CD4-positive, alpha-beta T cell (primary cell): ENCODE measurements at regions of chr1 and their contacts with region 1.

Region 1: GRCh38 chr1:51768971-51769588 is 109.4 kb downstream of the NRDC start:
- DNase-seq: peak in 4 of 14 experiments; percentile 39 to 69 (median 58)
- ATAC-seq: peak; percentile 76
- H3K4me3 ChIP-seq: no peak overlapping the region
- H3K4me3 Mint-ChIP-seq: no peak overlapping the region
- H3K27ac ChIP-seq: no peak overlapping the region
- H3K27ac Mint-ChIP-seq: peak overlapping the region; percentile 12
- H3K4me1 ChIP-seq: no peaks in the 10 kb centered on the region
- H3K4me1 Mint-ChIP-seq: peaks cover 7% of the 10 kb centered on the region
- H3K27me3 ChIP-seq: no peaks in the 10 kb centered on the region
- H3K27me3 Mint-ChIP-seq: no peaks in the 10 kb centered on the region
- CTCF ChIP-seq: peak; percentile 75

Region 2: GRCh38 chr1:50774759-50775351 is 994.2 kb before region 1 on chr1:
- CTCF ChIA-PET with region 1: no interaction called
- POLR2A ChIA-PET with region 1: no interaction called
- intact Hi-C with region 1: loop called in 1 of 2 experiments (anchors 10 kb)
- DNase-seq: peak in 4 of 14 experiments; percentile 8 to 68 (median 57)
- ATAC-seq: no peak
- H3K4me3 ChIP-seq: no peak overlapping the region
- H3K4me3 Mint-ChIP-seq: no peak overlapping the region
- H3K27ac ChIP-seq: no peak overlapping the region
- H3K27ac Mint-ChIP-seq: no peak overlapping the region
- H3K4me1 ChIP-seq: no peaks in the 10 kb centered on the region
- H3K4me1 Mint-ChIP-seq: peaks cover 8% of the 10 kb centered on the region
- H3K27me3 ChIP-seq: no peaks in the 10 kb centered on the region
- H3K27me3 Mint-ChIP-seq: no peaks in the 10 kb centered on the region
- CTCF ChIP-seq: peak; percentile 86

Region 3: GRCh38 chr1:51433269-51433971 is 335.7 kb before region 1 on chr1:
- CTCF ChIA-PET with region 1: no interaction called
- POLR2A ChIA-PET with region 1: no interaction called
- intact Hi-C with region 1: loop called in 1 of 2 experiments (anchors 10 kb)
- DNase-seq: peak in 2 of 14 experiments; percentile 10 to 76
- ATAC-seq: no peak
- H3K4me3 ChIP-seq: no peak overlapping the region
- H3K4me3 Mint-ChIP-seq: peak overlapping the region; percentile 49
- H3K27ac ChIP-seq: peak overlapping the region in 1 of 2 donors; percentile 3
- H3K27ac Mint-ChIP-seq: peak overlapping the region; percentile 52
- H3K4me1 ChIP-seq: peaks cover 34% of the 10 kb centered on the region
- H3K4me1 Mint-ChIP-seq: peaks cover 41% of the 10 kb centered on the region
- H3K27me3 ChIP-seq: no peaks in the 10 kb centered on the region
- H3K27me3 Mint-ChIP-seq: no peaks in the 10 kb centered on the region
- CTCF ChIP-seq: no peak

Region 4: DNA sequence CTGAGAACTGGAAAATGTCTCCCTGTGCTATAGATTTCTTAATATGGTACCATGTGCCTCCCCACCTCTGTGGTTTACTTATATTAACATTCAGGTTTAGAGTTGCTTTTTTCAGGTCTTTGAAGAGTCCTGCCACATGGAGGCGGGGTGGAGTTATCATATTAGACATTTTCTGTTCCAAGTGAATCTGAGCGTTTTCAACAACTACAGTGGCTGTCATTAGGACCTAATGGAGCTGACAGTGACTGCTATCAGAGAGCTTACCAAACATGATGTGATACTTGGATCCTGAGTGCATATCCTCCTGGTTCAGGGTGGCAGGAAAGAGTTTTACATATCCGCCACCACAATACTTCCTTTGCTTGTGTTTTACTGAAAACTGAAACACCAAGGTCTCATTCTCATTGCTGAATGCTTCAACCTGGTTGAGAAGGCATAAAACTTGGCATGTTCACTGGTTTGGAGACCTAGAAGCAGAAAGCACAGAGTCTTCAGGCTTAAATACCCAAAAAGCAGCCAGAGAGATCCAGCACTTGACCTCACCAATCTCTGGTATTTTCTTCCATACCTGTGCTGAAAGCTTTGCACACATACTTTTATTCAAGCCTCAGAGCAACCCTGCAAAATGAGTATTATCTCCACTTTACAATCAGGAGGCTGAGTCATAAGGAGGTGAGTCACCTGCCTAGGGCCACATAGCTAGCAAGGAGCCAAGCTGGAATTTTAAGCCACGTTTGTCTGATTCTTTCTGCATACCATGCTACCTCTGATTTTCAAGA is 199.6 kb before region 1 on chr1:
- CTCF ChIA-PET with region 1: no interaction called
- POLR2A ChIA-PET with region 1: no interaction called
- intact Hi-C with region 1: loop called in 1 of 2 experiments (anchors 5 kb)
- DNase-seq: peak in 10 of 14 experiments; percentile 2 to 69 (median 16)
- ATAC-seq: peak; percentile 84
- H3K4me3 ChIP-seq: peak overlapping the region; percentile 4
- H3K4me3 Mint-ChIP-seq: peak overlapping the region; percentile 40
- H3K27ac ChIP-seq: peak overlapping the region; percentile 43 to 69
- H3K27ac Mint-ChIP-seq: peak overlapping the region; percentile 78
- H3K4me1 ChIP-seq: peaks cover 38% of the 10 kb centered on the region
- H3K4me1 Mint-ChIP-seq: peaks cover 34% of the 10 kb centered on the region
- H3K27me3 ChIP-seq: no peaks in the 10 kb centered on the region
- H3K27me3 Mint-ChIP-seq: no peaks in the 10 kb centered on the region
- CTCF ChIP-seq: no peak

Region 5: GRCh38 chr1:51627678-51628077 is 141.4 kb before region 1 on chr1:
- CTCF ChIA-PET with region 1: interaction called, 4 read pairs
- POLR2A ChIA-PET with region 1: no interaction called
- intact Hi-C with region 1: loop called (anchors 5 kb)
- DNase-seq: peak in 1 of 14 experiments; percentile 24
- ATAC-seq: peak; percentile 37
- H3K4me3 ChIP-seq: no peak overlapping the region
- H3K4me3 Mint-ChIP-seq: no peak overlapping the region
- H3K27ac ChIP-seq: no peak overlapping the region
- H3K27ac Mint-ChIP-seq: no peak overlapping the region
- H3K4me1 ChIP-seq: no peaks in the 10 kb centered on the region
- H3K4me1 Mint-ChIP-seq: peaks cover 43% of the 10 kb centered on the region
- H3K27me3 ChIP-seq: no peaks in the 10 kb centered on the region
- H3K27me3 Mint-ChIP-seq: no peaks in the 10 kb centered on the region
- CTCF ChIP-seq: no peak

Region 6: DNA sequence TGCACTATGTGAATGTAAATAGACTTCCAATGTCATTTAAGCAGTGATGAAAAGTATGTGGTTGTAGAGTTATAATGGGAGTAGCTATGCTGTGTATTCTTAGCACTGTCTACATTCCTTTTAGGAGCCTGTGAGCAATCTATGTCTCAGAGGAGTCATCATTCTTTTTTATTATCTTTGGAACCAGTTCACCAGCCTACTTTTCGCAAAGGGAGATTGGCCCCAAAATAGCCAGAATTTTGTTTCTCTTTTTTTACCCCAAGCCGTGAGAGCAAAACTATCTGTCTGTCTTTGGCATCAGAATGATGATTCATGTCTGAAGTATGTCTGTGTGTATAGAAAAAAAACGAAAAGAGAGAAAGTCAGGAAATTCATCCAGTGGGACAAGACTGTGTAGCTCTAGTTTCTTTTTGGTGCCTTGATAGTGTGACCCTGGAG is 108.0 kb before region 1 on chr1:
- CTCF ChIA-PET with region 1: no interaction called
- POLR2A ChIA-PET with region 1: no interaction called
- intact Hi-C with region 1: no loop called
- DNase-seq: no peak
- ATAC-seq: no peak
- H3K4me3 ChIP-seq: no peak overlapping the region
- H3K4me3 Mint-ChIP-seq: no peak overlapping the region
- H3K27ac ChIP-seq: no peak overlapping the region
- H3K27ac Mint-ChIP-seq: no peak overlapping the region
- H3K4me1 ChIP-seq: no peaks in the 10 kb centered on the region
- H3K4me1 Mint-ChIP-seq: peaks cover 5% of the 10 kb centered on the region
- H3K27me3 ChIP-seq: no peaks in the 10 kb centered on the region
- H3K27me3 Mint-ChIP-seq: no peaks in the 10 kb centered on the region
- CTCF ChIP-seq: no peak

Region 7: GRCh38 chr1:51690285-51690961 is 78.7 kb before region 1 on chr1:
- CTCF ChIA-PET with region 1: no interaction called
- POLR2A ChIA-PET with region 1: no interaction called
- intact Hi-C with region 1: no loop called
- DNase-seq: peak in 2 of 14 experiments; percentile 26 to 37
- ATAC-seq: no peak
- H3K4me3 ChIP-seq: no peak overlapping the region
- H3K4me3 Mint-ChIP-seq: no peak overlapping the region
- H3K27ac ChIP-seq: no peak overlapping the region
- H3K27ac Mint-ChIP-seq: no peak overlapping the region
- H3K4me1 ChIP-seq: no peaks in the 10 kb centered on the region
- H3K4me1 Mint-ChIP-seq: peaks cover 31% of the 10 kb centered on the region
- H3K27me3 ChIP-seq: no peaks in the 10 kb centered on the region
- H3K27me3 Mint-ChIP-seq: no peaks in the 10 kb centered on the region
- CTCF ChIP-seq: no peak

Region 8: DNA sequence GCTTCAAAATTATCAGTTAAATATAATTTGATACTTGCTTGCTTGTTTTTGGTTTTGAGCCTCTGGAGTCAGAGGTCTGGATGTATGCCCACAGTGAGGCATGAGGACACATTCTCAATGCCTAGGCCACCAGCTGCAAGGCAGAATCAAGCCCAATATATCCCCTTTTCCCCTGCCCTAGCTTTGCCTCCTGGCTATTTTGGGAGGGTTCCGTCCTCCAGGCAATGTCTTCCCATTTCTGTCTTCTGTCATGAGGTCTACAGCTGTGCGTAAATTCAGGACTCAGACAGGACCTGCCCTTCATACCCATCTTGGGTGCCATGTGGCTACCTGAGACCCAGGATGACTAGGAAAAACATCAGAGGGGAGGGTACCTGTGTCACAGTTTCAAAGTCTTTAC is 90.3 kb after region 1 on chr1:
- CTCF ChIA-PET with region 1: no interaction called
- POLR2A ChIA-PET with region 1: no interaction called
- intact Hi-C with region 1: no loop called
- DNase-seq: no peak
- ATAC-seq: no peak
- H3K4me3 ChIP-seq: no peak overlapping the region
- H3K4me3 Mint-ChIP-seq: no peak overlapping the region
- H3K27ac ChIP-seq: no peak overlapping the region
- H3K27ac Mint-ChIP-seq: no peak overlapping the region
- H3K4me1 ChIP-seq: no peaks in the 10 kb centered on the region
- H3K4me1 Mint-ChIP-seq: peaks cover 46% of the 10 kb centered on the region
- H3K27me3 ChIP-seq: no peaks in the 10 kb centered on the region
- H3K27me3 Mint-ChIP-seq: no peaks in the 10 kb centered on the region
- CTCF ChIP-seq: no peak

Region 9: GRCh38 chr1:52263153-52263910 is 494.3 kb after region 1 on chr1:
- CTCF ChIA-PET with region 1: no interaction called
- POLR2A ChIA-PET with region 1: no interaction called
- intact Hi-C with region 1: no loop called
- DNase-seq: no peak
- ATAC-seq: no peak
- H3K4me3 ChIP-seq: no peak overlapping the region
- H3K4me3 Mint-ChIP-seq: no peak overlapping the region
- H3K27ac ChIP-seq: no peak overlapping the region
- H3K27ac Mint-ChIP-seq: no peak overlapping the region
- H3K4me1 ChIP-seq: no peaks in the 10 kb centered on the region
- H3K4me1 Mint-ChIP-seq: no peaks in the 10 kb centered on the region
- H3K27me3 ChIP-seq: no peaks in the 10 kb centered on the region
- H3K27me3 Mint-ChIP-seq: no peaks in the 10 kb centered on the region
- CTCF ChIP-seq: no peak